Calu3 (cell line): ENCODE measurements at regions of chr5 and their contacts with region 1.

Region 1: DNA sequence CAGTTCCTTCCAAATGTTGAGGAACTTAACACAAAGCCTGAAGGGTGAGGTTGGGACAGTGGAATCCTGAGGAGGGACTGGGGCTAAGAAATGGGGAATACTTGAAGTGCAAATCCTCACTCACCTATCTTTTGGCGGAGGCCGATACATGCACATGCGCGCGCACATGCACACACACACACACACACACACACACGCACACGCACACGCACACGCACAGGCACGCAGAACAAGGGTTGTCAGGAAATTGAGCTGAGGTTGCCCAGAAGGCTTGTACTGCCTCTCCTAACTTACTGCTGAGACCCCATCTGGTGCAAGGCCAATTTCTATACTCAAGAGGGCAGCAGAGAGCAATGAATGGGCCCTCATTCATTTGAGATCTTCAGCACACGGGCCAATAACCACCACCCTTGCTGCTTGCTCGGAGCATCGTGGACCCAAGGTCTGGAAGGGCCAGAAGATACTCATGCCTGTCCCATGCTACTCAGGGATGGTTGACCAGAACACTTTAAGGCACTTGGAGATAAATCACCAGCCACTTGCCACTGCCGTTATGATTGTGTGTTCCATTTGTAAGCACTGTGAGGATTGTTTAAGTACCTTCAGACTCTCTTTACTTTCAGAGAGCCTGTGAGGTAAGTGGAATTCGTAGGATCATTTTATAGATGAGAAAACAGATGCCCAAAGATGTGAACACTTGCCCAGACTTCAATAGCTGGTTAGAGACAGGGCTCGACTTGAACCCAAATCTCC is 21.5 kb downstream of the BTF3 start:
- DNase-seq: peak; percentile 83
- H3K4me3 Mint-ChIP-seq: no peak overlapping the region
- H3K27ac Mint-ChIP-seq: peak overlapping the region; percentile 59
- H3K4me1 Mint-ChIP-seq: peaks cover 18% of the 10 kb centered on the region
- H3K27me3 Mint-ChIP-seq: no peaks in the 10 kb centered on the region
- CTCF ChIP-seq: peak; percentile 54

Region 2: DNA sequence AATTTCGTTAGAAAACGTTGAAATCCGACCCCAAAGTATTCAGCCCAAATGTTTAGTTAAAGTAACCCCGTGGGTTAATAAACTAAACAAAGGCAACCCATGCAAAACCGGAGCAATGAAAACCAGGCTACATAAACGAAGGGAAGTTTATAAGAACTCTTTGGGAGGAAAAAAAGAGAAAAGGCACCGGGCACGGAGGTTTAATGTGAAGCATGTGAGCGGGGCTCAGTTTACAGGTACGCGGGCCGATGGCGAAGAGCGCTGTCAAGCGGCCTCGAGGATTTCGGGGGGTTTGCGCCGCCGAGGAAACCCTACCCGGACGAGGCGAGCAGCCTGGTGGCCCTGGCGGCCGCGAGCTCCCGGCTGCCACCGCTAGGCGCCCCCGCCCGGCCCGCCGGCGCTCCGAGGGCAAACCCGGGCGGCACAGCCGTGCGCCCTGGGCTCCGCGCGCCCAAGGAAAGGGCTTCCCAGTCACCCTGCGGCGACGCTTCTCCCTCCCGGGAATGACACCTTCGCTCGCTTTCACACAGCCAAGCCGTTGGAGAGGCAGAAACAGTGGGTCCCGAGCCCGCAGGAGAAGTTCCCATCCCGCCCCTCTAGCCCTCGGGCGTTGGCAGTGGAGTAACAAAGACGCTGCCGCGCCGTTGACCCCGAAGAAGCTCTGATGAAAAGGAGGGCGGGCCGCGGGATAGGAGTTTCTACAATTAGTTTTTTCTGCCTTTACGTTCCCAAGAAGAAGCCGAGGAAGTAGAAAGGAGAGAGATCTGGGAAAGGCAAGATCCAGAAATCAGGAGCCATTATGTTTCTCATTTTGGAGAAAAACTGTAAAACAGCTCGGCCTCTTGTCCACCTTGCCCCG is 220.7 kb before region 1 on chr5:
- CTCF ChIA-PET with region 1: no interaction called
- intact Hi-C with region 1: no loop called
- DNase-seq: peak; percentile 74
- H3K4me3 Mint-ChIP-seq: peak overlapping the region; percentile 45
- H3K27ac Mint-ChIP-seq: no peak overlapping the region
- H3K4me1 Mint-ChIP-seq: peaks cover 13% of the 10 kb centered on the region
- H3K27me3 Mint-ChIP-seq: peaks cover 97% of the 10 kb centered on the region
- CTCF ChIP-seq: peak; percentile 57

Region 3: DNA sequence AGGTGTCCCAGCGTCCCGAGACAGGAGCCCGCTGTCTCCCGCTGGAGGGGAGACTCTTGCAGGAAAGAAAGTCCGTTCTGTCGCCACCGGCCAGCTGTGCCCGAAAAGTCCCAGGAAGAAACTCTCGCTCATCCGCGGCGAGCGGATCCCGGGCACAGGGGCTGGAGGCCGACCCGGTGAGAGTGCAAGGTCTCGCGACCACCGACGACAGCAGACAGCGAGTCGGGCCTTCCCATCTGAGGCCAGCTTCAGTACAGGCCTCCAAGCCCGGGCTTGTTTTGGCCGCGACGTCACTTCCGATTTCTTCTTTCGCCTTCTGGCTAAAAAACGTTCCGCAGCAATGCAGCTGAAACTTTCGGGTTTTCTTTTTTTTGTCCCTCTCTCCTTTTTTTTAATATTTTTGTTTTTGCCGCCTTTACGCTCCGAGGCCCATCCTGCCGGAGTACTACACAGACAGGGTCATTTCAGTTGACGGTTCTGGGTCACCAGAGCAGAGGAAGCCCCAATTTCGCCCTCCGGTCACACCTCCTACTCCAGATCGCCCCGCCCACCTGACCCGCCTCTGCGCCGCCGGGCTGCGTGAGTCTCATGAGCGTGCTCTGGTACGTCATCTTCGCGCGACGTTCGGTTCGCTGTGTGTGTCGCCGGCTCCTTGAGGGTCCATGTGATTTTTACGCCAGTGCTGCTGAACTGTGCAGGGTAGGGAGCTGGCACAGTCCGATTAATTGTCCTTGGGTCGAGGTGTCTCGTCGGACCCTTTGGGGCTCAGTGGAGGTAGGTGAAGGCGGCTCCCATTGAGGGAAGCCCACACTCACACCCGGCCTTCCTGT is 45.6 kb after region 1 on chr5 and contains the starts of genes ANKRA2 and UTP15:
- CTCF ChIA-PET with region 1: no interaction called
- intact Hi-C with region 1: loop called (anchors 2 kb)
- DNase-seq: peak; percentile 99
- H3K4me3 Mint-ChIP-seq: peak within 1 kb of the TSS; percentile 70
- H3K27ac Mint-ChIP-seq: peak within 1 kb of the TSS; percentile 68
- H3K4me1 Mint-ChIP-seq: peaks cover 16% of the 10 kb centered on the region
- H3K27me3 Mint-ChIP-seq: no peaks in the 10 kb centered on the region
- CTCF ChIP-seq: no peak
- total RNA-seq, gene ANKRA2: 24.4 and 26.5 TPM in 2 replicates
- total RNA-seq, gene UTP15: 44.4 and 47.5 TPM in 2 replicates